ENCODE measurements at regions of chr12 and their contacts with region 1.

Region 1: DNA sequence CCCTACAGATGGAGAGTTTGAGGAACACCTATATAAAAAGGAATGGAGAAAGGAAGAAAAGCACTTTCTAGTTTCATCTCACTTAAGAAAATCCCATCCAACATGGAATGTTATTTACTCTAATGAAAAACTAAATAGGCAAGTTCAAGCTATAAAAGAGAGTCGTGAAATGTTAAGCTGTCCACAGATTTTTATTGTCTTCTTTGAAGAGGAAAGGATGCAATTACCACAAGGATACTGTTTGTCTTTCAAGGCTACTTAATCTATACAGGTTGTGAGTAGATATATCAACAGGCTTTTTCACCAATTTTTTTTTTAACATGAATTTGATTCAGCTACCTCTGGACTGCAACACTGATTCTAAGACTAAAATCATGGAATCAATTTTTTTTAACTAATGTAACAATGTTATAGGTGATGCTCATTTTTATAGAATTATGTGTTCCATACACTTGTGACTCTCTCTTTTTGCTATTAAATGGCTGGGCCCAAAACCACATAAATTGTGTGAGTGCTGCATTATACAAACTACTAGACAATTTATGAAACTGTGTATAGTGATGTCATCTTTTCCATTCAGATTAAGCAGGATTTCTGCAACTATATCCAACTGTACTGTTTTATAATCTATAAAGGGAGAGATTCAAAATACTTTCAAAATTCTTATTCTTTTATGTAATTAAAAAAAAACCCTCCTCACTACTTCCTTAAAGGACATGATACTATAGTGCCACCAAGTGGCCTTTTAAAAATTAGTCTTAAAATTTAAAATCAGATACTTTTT is 26.8 kb upstream of the BMAL2 start:
- DNase-seq: no peak
- ATAC-seq: peak; percentile 63

Region 2: DNA sequence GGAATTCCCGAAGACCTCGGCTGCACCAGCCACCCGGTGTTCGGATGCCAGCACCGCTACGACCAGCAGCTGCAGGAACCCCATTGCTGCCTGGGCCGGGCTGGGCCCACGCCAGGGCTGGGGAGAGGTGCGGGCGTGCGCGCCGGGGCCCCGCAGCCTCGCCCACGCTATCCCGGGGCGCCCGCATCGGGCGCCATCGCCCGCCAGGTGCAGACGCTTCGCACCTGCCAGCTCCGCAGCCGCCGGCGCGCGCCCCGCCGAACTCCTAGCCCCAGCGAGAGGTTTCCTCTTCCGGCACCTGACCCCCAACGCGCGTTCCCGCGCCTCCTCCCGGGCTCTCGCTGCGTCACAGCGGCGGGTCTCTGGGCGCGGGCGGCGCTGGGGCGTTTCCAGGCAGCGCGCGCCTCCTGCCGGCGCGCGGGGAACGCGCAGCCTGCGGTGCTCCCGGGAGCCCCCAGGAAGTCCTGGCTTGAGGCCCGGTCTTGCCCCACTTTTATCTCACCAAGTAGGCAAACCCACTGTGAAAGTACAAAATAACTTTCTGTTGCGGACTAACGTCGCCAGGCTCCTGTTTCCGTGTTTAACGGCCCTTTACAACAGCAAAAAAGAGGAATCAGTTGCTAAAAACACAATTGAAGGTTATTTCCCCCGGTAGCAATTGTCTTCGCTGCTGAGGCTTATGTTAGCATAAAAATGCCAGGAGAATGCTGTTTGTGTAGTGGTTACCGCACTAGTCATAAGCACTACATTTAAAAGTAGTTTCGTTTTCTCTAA is 291.6 kb before region 1 on chr12 and contains the start of gene TM7SF3:
- intact Hi-C with region 1: loop called (anchors 10 kb)
- DNase-seq: peak; percentile 95
- ATAC-seq: peak; percentile 93
- total RNA-seq, gene TM7SF3: 58.9 TPM

Region 3: GRCh38 chr12:27277846-27278260 is 28.0 kb before region 1 on chr12:
- intact Hi-C with region 1: no loop called
- DNase-seq: no peak
- ATAC-seq: peak; percentile 86

Region 4: DNA sequence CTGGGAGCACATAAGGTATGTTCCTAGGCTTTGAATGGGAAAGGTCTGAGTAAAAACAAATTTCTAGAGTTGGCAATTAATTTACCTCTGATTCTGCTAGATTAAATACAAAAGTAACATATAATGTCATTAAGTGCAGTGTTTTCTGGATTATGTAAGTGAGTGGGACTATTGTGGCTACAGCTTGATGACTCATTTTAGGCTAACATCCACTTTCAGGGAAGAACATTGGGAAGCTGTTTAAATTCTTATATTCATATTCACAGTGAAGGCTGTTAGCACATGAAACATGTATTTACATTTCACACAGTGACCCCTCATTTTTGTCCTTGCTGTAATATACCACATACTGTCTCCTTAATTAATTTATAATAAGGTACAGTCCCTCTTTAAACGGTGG is 13.5 kb after region 1 on chr12:
- intact Hi-C with region 1: no loop called
- DNase-seq: no peak
- ATAC-seq: no peak